Dorsolateral prefrontal cortex (tissue), 120 donors: ENCODE measurements at regions of chr6 and their contacts with region 1.

Region 1: DNA sequence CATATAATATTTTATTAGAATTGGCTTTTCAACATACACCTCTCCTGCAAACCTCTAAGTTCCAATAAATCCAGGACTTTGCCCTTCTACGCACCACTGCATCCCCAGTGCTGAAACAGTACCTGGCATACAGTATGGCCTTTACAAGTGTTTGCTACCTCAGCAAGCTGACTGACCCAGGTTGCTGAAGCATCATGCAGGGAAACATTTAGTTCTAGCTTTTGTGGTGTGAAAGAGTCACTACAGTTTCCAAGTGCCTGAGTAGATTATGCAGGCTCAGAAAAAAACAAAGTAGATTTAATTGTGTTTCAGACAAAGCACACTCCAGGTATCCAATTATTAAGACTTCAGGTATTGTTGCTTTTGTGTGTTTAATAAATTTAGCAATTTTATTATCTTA is 614.2 kb upstream of the NRSN1 start:
- DNase-seq: no peak
- H3K4me3 ChIP-seq: no peak overlapping the region
- H3K27ac ChIP-seq: no peak overlapping the region
- H3K27me3 ChIP-seq: no peaks in the 10 kb centered on the region
- CTCF ChIP-seq: no peak

Region 2: DNA sequence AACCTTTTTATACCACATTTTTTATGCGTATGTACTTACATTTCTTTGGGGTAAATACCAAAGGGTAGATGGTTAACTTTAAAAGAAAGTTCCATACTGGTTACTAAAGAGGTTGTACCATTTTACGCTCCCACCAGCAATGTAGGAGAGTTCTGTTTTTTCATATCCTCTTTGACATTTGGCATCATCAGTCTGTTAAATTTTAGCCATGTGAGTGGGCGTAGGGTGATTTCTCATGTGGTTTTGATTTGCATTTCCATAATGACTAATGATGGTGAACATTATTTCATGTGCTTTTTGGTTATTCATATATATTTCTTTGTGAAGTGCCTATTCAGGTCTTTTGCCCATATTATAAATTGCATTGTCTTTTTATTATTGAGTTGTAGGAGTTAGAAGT is 1409.1 kb before region 1 on chr6:
- intact Hi-C with region 1: loop called in 1 of 2 experiments (anchors 10 kb)
- DNase-seq: no peak
- H3K4me3 ChIP-seq: no peak overlapping the region
- H3K27ac ChIP-seq: no peak overlapping the region
- H3K27me3 ChIP-seq: no peaks in the 10 kb centered on the region
- CTCF ChIP-seq: no peak

Region 3: GRCh38 chr6:23003671-23004467 is 507.9 kb before region 1 on chr6:
- intact Hi-C with region 1: no loop called
- DNase-seq: peak in 3 of 10 donors; percentile 33 to 37 (median 34)
- H3K4me3 ChIP-seq: no peak overlapping the region
- H3K27ac ChIP-seq: peak overlapping the region in 10 of 59 donors; percentile 7 to 49 (median 30)
- H3K27me3 ChIP-seq: no peaks in the 10 kb centered on the region
- CTCF ChIP-seq: no peak

Region 4: DNA sequence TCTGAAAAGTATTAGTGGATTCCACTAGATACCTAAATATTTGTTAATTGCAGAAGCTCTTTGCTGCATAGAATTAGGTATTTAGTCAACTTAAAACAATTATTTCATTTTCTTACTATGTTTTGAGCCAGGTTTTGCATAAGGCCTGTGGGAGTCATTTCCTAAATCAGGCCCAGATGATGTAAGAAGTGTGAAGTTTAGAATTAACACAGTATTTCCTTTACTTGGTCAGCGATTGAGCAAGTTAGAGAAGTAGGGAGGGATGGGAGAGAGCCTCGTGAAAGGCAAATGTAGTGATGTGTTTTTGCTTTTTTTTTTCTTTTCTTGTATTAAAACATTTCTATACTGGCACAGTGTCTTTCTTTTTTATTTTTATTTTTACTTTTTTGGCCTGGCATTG is 231.4 kb before region 1 on chr6:
- intact Hi-C with region 1: no loop called
- DNase-seq: no peak
- H3K4me3 ChIP-seq: no peak overlapping the region
- H3K27ac ChIP-seq: peak overlapping the region in 5 of 59 donors; percentile 18 to 66 (median 30)
- H3K27me3 ChIP-seq: no peaks in the 10 kb centered on the region
- CTCF ChIP-seq: no peak

Region 5: DNA sequence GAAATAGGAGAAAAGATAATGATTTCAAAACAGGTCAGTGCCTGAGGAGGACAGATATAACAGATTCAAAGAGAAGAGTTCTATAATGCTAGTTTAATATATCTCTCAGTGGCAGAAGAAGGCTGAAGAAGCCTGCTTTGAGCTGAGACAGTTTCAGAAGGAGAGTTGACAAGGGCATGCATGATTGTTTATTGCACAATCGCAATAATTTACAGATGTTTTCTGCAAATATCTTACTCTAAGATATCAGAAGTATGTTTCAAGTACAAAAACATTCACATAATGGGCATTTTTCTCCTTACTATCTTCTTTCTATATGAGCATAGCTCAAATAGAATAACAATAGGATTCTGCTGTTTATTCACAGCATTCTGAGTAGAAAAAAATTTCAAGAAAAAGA is 56.5 kb after region 1 on chr6:
- intact Hi-C with region 1: no loop called
- DNase-seq: no peak
- H3K4me3 ChIP-seq: no peak overlapping the region
- H3K27ac ChIP-seq: no peak overlapping the region
- H3K27me3 ChIP-seq: no peaks in the 10 kb centered on the region
- CTCF ChIP-seq: no peak

Region 6: GRCh38 chr6:23713211-23713610 is 201.4 kb after region 1 on chr6:
- intact Hi-C with region 1: no loop called
- DNase-seq: no peak
- H3K4me3 ChIP-seq: no peak overlapping the region
- H3K27ac ChIP-seq: no peak overlapping the region
- H3K27me3 ChIP-seq: no peaks in the 10 kb centered on the region
- CTCF ChIP-seq: no peak